ENCODE measurements at regions of chr1 and their contacts with region 1.

Region 1: GRCh38 chr1:158654571-158654970 is 31.9 kb downstream of the SPTA1 start:
- DNase-seq: no peak
- H3K4me3 Mint-ChIP-seq: no peak overlapping the region
- H3K27ac Mint-ChIP-seq: no peak overlapping the region
- H3K4me1 Mint-ChIP-seq: peaks cover 9% of the 10 kb centered on the region
- H3K27me3 Mint-ChIP-seq: no peaks in the 10 kb centered on the region
- CTCF ChIP-seq: no peak

Region 2: GRCh38 chr1:158809862-158810261 is 155.3 kb after region 1 on chr1:
- CTCF ChIA-PET with region 1: no interaction called
- intact Hi-C with region 1: no loop called
- DNase-seq: no peak
- H3K4me3 Mint-ChIP-seq: no peak overlapping the region
- H3K27ac Mint-ChIP-seq: no peak overlapping the region
- H3K4me1 Mint-ChIP-seq: no peaks in the 10 kb centered on the region
- H3K27me3 Mint-ChIP-seq: peaks cover 50% of the 10 kb centered on the region
- CTCF ChIP-seq: no peak

Region 3: GRCh38 chr1:159009704-159010361 is 355.3 kb after region 1 on chr1 and contains the start of gene IFI16:
- CTCF ChIA-PET with region 1: no interaction called
- intact Hi-C with region 1: loop called (anchors 10 kb)
- DNase-seq: peak; percentile 58
- H3K4me3 Mint-ChIP-seq: peak within 1 kb of the TSS; percentile 75
- H3K27ac Mint-ChIP-seq: peak within 1 kb of the TSS; percentile 90
- H3K4me1 Mint-ChIP-seq: no peaks in the 10 kb centered on the region
- H3K27me3 Mint-ChIP-seq: no peaks in the 10 kb centered on the region
- CTCF ChIP-seq: no peak
- total RNA-seq, gene IFI16: 52.8 and 84.5 TPM in 2 replicates

Measured in Calu3 (cell line).